ENCODE measurements at regions of chr21 and their contacts with region 1.

Region 1: GRCh38 chr21:46323227-46324128 is at the start of gene C21orf58:
- DNase-seq: peak; percentile 97 to 98
- H3K4me3 ChIP-seq: peak within 1 kb of the TSS; percentile 81
- H3K4me3 Mint-ChIP-seq: peak within 1 kb of the TSS; percentile 77
- H3K27ac Mint-ChIP-seq: peak within 1 kb of the TSS; percentile 91
- H3K4me1 ChIP-seq: peaks cover 11% of the 10 kb centered on the region
- H3K4me1 Mint-ChIP-seq: peaks cover 15% of the 10 kb centered on the region
- H3K27me3 ChIP-seq: no peaks in the 10 kb centered on the region
- H3K27me3 Mint-ChIP-seq: no peaks in the 10 kb centered on the region
- CTCF ChIP-seq: no peak
- total RNA-seq, gene C21orf58: 17.7 and 18.6 TPM in 2 replicates

Region 2: DNA sequence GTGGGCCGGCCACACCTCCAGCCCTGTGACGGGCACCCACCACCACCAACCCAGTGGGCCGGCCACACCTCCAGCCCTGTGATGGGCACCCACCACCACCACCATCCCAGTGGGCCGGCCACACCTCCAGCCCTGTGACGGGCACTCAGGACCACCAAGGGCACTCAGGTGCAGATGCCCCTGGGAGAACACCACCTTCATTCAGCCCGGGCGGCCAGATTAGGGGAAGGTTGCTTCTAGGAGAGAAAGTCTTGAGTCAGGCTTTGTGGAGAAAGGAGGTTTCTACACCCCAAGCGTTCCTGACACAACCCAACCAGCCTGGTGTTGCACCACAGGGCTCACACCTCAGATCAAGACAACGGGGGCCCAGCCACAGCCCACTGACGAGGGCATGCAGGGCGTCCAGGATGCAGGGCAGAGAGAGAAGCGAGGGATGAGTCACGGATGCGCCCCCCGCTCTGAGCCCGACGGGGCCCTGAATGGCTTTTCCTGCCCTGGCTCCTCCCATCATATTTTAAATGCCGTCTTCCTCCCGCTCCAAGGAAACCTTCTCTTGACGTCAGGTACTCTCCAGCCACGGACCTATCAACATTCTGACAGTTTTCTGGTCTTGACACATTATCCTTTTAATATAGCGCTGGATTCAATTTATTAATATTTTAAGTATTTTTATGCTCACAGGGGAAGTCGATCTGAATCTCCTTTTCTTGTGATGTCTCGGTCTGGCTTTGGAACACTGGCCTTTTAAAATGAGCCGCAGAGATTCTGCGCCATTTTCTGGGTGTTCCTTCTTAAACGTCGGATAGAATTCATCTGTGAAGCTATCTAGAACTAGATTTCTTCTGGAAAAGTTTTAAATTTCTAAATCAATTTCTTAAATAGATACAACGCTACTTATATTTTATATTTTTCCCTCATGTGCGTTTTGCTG is 138.6 kb before region 1 on chr21:
- CTCF ChIA-PET with region 1: no interaction called
- POLR2A ChIA-PET with region 1: no interaction called
- intact Hi-C with region 1: no loop called
- DNase-seq: peak; percentile 66 to 76
- H3K4me3 ChIP-seq: peak overlapping the region; percentile 31
- H3K4me3 Mint-ChIP-seq: peak overlapping the region; percentile 62
- H3K27ac Mint-ChIP-seq: peak overlapping the region; percentile 48
- H3K4me1 ChIP-seq: peaks cover 11% of the 10 kb centered on the region
- H3K4me1 Mint-ChIP-seq: peaks cover 25% of the 10 kb centered on the region
- H3K27me3 ChIP-seq: no peaks in the 10 kb centered on the region
- H3K27me3 Mint-ChIP-seq: no peaks in the 10 kb centered on the region
- CTCF ChIP-seq: no peak

Region 3: DNA sequence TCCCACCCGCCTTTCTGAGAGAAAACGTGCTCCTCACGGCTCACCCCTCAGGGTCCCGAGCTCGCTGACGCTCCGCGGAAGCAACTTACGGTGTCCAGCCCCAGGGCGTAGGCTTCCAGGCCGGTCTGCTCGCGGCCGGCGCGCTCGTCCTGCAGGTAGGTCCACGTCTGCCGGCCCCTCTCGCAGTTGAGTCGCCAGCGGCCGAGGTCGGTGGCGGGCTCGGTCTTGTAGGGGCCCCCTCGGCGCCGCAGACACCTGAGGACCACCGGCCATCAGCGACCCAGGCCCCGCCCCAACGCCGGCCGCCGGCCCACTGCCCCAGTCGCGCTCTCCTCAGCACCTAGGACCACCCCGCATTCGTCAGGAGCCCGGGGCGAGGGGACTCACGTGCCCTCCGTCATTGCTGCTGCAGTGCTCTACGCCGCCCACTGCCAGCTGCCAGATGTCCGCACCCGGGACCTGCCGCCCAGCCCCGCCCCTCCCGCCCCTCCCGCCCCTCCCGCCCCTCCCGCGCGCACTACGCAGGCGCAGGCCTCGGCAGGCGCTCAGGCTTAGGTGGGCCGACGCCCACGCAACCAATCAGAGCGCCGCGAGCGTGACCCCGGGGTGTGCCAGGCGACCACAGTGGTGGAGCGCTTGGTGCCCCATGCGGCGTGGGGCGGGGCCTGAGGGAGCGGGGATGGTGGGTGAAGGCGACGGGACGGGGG is 95.0 kb before region 1 on chr21 and contains the start of gene LSS:
- CTCF ChIA-PET with region 1: interaction called, 5 read pairs
- POLR2A ChIA-PET with region 1: interaction called, 3 read pairs
- intact Hi-C with region 1: loop called (anchors 5 kb)
- DNase-seq: peak; percentile 99
- H3K4me3 ChIP-seq: peak within 1 kb of the TSS; percentile 97
- H3K4me3 Mint-ChIP-seq: peak within 1 kb of the TSS; percentile 93
- H3K27ac Mint-ChIP-seq: peak within 1 kb of the TSS; percentile 99
- H3K4me1 ChIP-seq: peaks cover 32% of the 10 kb centered on the region
- H3K4me1 Mint-ChIP-seq: peaks cover 33% of the 10 kb centered on the region
- H3K27me3 ChIP-seq: no peaks in the 10 kb centered on the region
- H3K27me3 Mint-ChIP-seq: no peaks in the 10 kb centered on the region
- CTCF ChIP-seq: no peak
- total RNA-seq, gene LSS: 121 and 127 TPM in 2 replicates

Region 4: GRCh38 chr21:46285761-46286496 is 37.5 kb before region 1 on chr21 and contains the start of gene YBEY:
- CTCF ChIA-PET with region 1: interaction called, 8 read pairs
- POLR2A ChIA-PET with region 1: interaction called, 4 read pairs
- intact Hi-C with region 1: loop called (anchors 2 kb)
- DNase-seq: peak; percentile 93
- H3K4me3 ChIP-seq: peak within 1 kb of the TSS; percentile 68
- H3K4me3 Mint-ChIP-seq: peak within 1 kb of the TSS; percentile 88
- H3K27ac Mint-ChIP-seq: peak within 1 kb of the TSS; percentile 82
- H3K4me1 ChIP-seq: peaks cover 12% of the 10 kb centered on the region
- H3K4me1 Mint-ChIP-seq: peaks cover 7% of the 10 kb centered on the region
- H3K27me3 ChIP-seq: no peaks in the 10 kb centered on the region
- H3K27me3 Mint-ChIP-seq: no peaks in the 10 kb centered on the region
- CTCF ChIP-seq: peak; percentile 10 to 51
- total RNA-seq, gene YBEY: 10.6 and 11.5 TPM in 2 replicates

Measured in Caco-2 (cell line).